CD4-positive, alpha-beta memory T cell (primary cell): ENCODE measurements at regions of chr19 and their contacts with region 1.

Region 1: GRCh38 chr19:4815426-4816201 is 15.9 kb downstream of the TICAM1 start:
- DNase-seq: peak; percentile 60 to 76 (median 68)
- H3K4me3 ChIP-seq: peak overlapping the region in 1 of 2 donors; percentile 16
- H3K4me3 Mint-ChIP-seq: peak overlapping the region; percentile 55 to 85 (median 80)
- H3K27ac ChIP-seq: no peak overlapping the region
- H3K27ac Mint-ChIP-seq: peak overlapping the region; percentile 43 to 94 (median 88)
- H3K4me1 ChIP-seq: peaks cover 8% of the 10 kb centered on the region
- H3K4me1 Mint-ChIP-seq: peaks cover 9 to 21% (median 13%) of the 10 kb centered on the region in 4 donors
- H3K27me3 ChIP-seq: no peaks in the 10 kb centered on the region
- H3K27me3 Mint-ChIP-seq: no peaks in the 10 kb centered on the region

Region 2: DNA sequence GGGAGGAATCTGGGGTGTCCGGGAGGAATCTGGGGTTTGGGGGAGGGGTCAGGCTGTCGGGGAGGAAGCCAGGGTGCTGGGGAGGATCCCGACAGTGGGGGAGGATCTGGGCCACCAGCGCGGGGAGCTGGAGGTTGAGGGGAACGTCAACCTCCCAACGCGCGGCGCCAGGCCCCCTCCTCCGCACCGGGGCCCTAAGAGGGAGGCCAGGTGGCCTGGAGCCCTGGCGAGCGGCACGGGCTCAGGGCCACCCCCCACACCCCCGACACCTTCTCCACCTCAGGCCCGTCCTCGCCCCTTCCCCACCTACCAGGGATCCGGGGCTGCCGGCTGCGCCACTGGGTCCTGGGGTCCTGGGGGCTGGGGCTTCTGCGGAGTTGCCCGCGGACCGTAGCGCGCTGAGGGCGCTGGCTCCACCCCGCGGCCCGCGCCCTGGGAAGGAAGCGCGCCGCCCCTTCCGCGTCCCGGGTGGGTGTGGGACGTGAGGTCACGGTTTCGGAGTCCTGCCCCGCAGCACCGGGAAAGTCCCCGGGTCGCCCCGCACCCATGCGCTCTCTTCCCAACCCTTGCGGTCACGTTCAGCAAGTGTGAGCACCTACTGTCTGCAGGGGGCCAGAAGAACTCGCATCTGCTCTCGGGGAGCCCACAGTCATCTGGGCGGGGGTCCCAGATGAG is 15.8 kb after region 1 on chr19 and contains the start of gene TICAM1:
- CTCF ChIA-PET with region 1: interaction called, 139 read pairs
- POLR2A ChIA-PET with region 1: interaction called, 3 read pairs
- intact Hi-C with region 1: loop called (anchors 1 kb)
- DNase-seq: peak; percentile 80 to 88 (median 80)
- H3K4me3 ChIP-seq: peak within 1 kb of the TSS; percentile 43 to 83
- H3K4me3 Mint-ChIP-seq: peak within 1 kb of the TSS; percentile 88 to 94 (median 90)
- H3K27ac ChIP-seq: peak within 1 kb of the TSS; percentile 92
- H3K27ac Mint-ChIP-seq: peak within 1 kb of the TSS; percentile 90 to 98 (median 96)
- H3K4me1 ChIP-seq: peaks cover 21% of the 10 kb centered on the region
- H3K4me1 Mint-ChIP-seq: peaks cover 19 to 36% (median 28%) of the 10 kb centered on the region in 4 donors
- H3K27me3 ChIP-seq: no peaks in the 10 kb centered on the region
- H3K27me3 Mint-ChIP-seq: no peaks in the 10 kb centered on the region
- total RNA-seq, gene TICAM1: 16.0 to 17.9 TPM

Region 3: DNA sequence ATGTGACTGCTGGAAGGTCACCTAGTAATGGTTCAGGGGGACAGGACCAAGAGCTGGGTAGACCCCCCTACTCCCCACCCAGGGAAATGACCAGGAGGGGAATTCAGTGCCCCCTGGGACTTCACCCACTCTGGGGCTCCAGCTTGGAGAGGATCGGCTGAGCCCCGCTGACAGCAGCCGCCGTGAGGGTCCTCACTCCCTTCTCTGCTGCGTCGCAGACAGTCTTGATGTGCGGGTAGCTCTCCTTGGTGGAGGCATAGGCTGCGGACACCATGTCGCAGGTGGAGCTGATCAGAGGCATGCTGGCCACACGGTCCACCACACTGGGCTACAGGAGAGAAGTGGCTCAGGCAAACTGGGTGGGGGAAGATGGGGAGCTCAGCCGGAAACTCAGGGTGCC is 44.1 kb after region 1 on chr19:
- CTCF ChIA-PET with region 1: interaction called, 396 read pairs
- POLR2A ChIA-PET with region 1: no interaction called
- intact Hi-C with region 1: no loop called
- DNase-seq: no peak
- H3K4me3 ChIP-seq: no peak overlapping the region
- H3K4me3 Mint-ChIP-seq: no peak overlapping the region
- H3K27ac ChIP-seq: no peak overlapping the region
- H3K27ac Mint-ChIP-seq: no peak overlapping the region
- H3K4me1 ChIP-seq: no peaks in the 10 kb centered on the region
- H3K4me1 Mint-ChIP-seq: peaks cover 0 to 4% (median under 1%) of the 10 kb centered on the region in 4 donors
- H3K27me3 ChIP-seq: no peaks in the 10 kb centered on the region
- H3K27me3 Mint-ChIP-seq: no peaks in the 10 kb centered on the region

Region 4: GRCh38 chr19:4909897-4910593 is 94.4 kb after region 1 on chr19:
- CTCF ChIA-PET with region 1: interaction called, 74 read pairs
- POLR2A ChIA-PET with region 1: interaction called, 10 read pairs
- intact Hi-C with region 1: loop called (anchors 1 kb)
- DNase-seq: peak; percentile 92 to 95 (median 93)
- H3K4me3 ChIP-seq: peak overlapping the region; percentile 49 to 71
- H3K4me3 Mint-ChIP-seq: peak overlapping the region; percentile 84 to 100 (median 92)
- H3K27ac ChIP-seq: peak overlapping the region; percentile 33
- H3K27ac Mint-ChIP-seq: peak overlapping the region in 5 of 7 donors; percentile 14 to 98 (median 66)
- H3K4me1 ChIP-seq: peaks cover 57% of the 10 kb centered on the region
- H3K4me1 Mint-ChIP-seq: peaks cover 23 to 55% (median 44%) of the 10 kb centered on the region in 4 donors
- H3K27me3 ChIP-seq: no peaks in the 10 kb centered on the region
- H3K27me3 Mint-ChIP-seq: no peaks in the 10 kb centered on the region

Region 5: GRCh38 chr19:5031231-5032100 is 215.9 kb after region 1 on chr19:
- CTCF ChIA-PET with region 1: interaction called, 75 read pairs
- POLR2A ChIA-PET with region 1: no interaction called
- intact Hi-C with region 1: no loop called
- DNase-seq: peak; percentile 67 to 80 (median 71)
- H3K4me3 ChIP-seq: no peak overlapping the region
- H3K4me3 Mint-ChIP-seq: no peak overlapping the region
- H3K27ac ChIP-seq: no peak overlapping the region
- H3K27ac Mint-ChIP-seq: peak overlapping the region in 1 of 7 donors; percentile 18
- H3K4me1 ChIP-seq: peaks cover 7% of the 10 kb centered on the region
- H3K4me1 Mint-ChIP-seq: peaks cover 0 to 17% (median 7%) of the 10 kb centered on the region in 4 donors
- H3K27me3 ChIP-seq: no peaks in the 10 kb centered on the region
- H3K27me3 Mint-ChIP-seq: no peaks in the 10 kb centered on the region